ENCODE measurements at regions of chrX and their contacts with region 1.

Region 1: DNA sequence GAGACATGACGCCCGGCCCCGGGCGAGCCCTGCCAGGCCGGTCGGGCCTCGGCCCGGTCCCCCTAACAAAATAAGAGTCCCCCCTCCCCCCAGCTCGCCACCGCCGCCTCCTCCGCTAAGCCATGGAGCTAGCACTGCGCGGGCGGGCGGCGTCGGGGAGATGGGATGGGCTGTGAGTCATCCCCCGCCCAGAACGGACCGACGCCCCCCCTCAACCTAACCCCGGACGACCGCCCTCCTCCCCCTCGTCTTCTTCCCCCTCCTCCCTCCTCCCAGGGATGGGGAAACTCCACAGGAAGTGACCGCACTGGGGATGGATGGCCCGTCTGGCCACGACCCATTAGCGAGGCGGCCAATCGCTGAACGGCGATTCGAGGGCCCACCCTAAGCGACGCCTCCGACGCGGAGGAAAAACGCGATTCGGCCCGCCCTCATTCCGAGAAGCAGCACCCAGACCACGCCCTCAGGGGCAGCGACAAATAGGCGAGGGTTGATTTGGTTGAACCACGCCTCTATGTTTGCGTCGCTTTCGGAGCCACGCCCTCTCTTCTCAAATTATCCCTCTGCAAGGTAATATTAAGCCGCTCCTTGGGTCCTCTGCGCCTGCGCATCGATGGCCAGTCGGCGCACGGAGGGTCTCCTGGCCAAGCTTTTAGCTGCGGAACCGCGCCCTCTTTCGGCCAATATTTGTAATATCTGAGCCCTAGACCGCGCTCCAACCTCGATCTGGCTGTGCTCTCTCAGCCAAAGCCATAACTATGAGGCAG is at the start of gene TFE3:
- DNase-seq: peak; percentile 77 to 96 (median 91)
- ATAC-seq: peak; percentile 93
- H3K4me3 ChIP-seq: peak within 1 kb of the TSS; percentile 54
- H3K4me3 Mint-ChIP-seq: peak within 1 kb of the TSS; percentile 78 to 95 (median 89)
- H3K27ac ChIP-seq: peak within 1 kb of the TSS; percentile 96
- H3K27ac Mint-ChIP-seq: peak within 1 kb of the TSS; percentile 80 to 96 (median 96)
- H3K4me1 ChIP-seq: peaks cover 5 to 21% of the 10 kb centered on the region in 2 donors
- H3K4me1 Mint-ChIP-seq: peaks cover 18 to 40% (median 31%) of the 10 kb centered on the region in 7 donors
- H3K27me3 ChIP-seq: no peaks in the 10 kb centered on the region
- H3K27me3 Mint-ChIP-seq: no peaks in the 10 kb centered on the region
- total RNA-seq, gene TFE3: 26.2 to 54.2 (median 30.5) TPM

Region 2: GRCh38 chrX:48475774-48476577 is 567.4 kb before region 1 on chrX and contains the start of gene FTSJ1:
- CTCF ChIA-PET with region 1: no interaction called
- POLR2A ChIA-PET with region 1: no interaction called
- intact Hi-C with region 1: loop called in 1 of 2 experiments (anchors 1 kb)
- DNase-seq: peak; percentile 59 to 95 (median 91)
- ATAC-seq: peak; percentile 93
- H3K4me3 ChIP-seq: peak within 1 kb of the TSS; percentile 83
- H3K4me3 Mint-ChIP-seq: peak within 1 kb of the TSS; percentile 74 to 93 (median 88)
- H3K27ac ChIP-seq: peak within 1 kb of the TSS; percentile 93
- H3K27ac Mint-ChIP-seq: peak within 1 kb of the TSS; percentile 84 to 96 (median 93)
- H3K4me1 ChIP-seq: peaks cover 8 to 10% of the 10 kb centered on the region in 2 donors
- H3K4me1 Mint-ChIP-seq: peaks cover 19 to 35% (median 26%) of the 10 kb centered on the region in 7 donors
- H3K27me3 ChIP-seq: no peaks in the 10 kb centered on the region
- H3K27me3 Mint-ChIP-seq: no peaks in the 10 kb centered on the region
- total RNA-seq, gene FTSJ1: 48.6 to 62.5 (median 59.5) TPM

Region 3: GRCh38 chrX:48597353-48598264 is 445.8 kb before region 1 on chrX and contains the start of gene WDR13:
- CTCF ChIA-PET with region 1: no interaction called
- POLR2A ChIA-PET with region 1: no interaction called
- intact Hi-C with region 1: loop called (anchors 1 kb)
- DNase-seq: peak; percentile 77 to 93 (median 91)
- ATAC-seq: peak; percentile 93
- H3K4me3 ChIP-seq: peak within 1 kb of the TSS; percentile 98
- H3K4me3 Mint-ChIP-seq: peak within 1 kb of the TSS; percentile 81 to 99 (median 96)
- H3K27ac ChIP-seq: peak within 1 kb of the TSS; percentile 94
- H3K27ac Mint-ChIP-seq: peak within 1 kb of the TSS; percentile 98 to 100 (median 99)
- H3K4me1 ChIP-seq: peaks cover 0 to 8% of the 10 kb centered on the region in 2 donors
- H3K4me1 Mint-ChIP-seq: peaks cover 4 to 16% (median 11%) of the 10 kb centered on the region in 7 donors
- H3K27me3 ChIP-seq: no peaks in the 10 kb centered on the region
- H3K27me3 Mint-ChIP-seq: peaks cover 0 to 2% (median 0%) of the 10 kb centered on the region in 5 donors
- total RNA-seq, gene WDR13: 44.8 to 66.9 (median 54.4) TPM

Region 4: GRCh38 chrX:48891402-48892288 is 151.8 kb before region 1 on chrX:
- CTCF ChIA-PET with region 1: no interaction called
- POLR2A ChIA-PET with region 1: no interaction called
- intact Hi-C with region 1: loop called in 1 of 2 experiments (anchors 2 kb)
- DNase-seq: peak; percentile 61 to 79 (median 75)
- ATAC-seq: peak; percentile 94
- H3K4me3 ChIP-seq: peak overlapping the region; percentile 53
- H3K4me3 Mint-ChIP-seq: peak overlapping the region; percentile 70 to 98 (median 86)
- H3K27ac ChIP-seq: peak overlapping the region; percentile 81
- H3K27ac Mint-ChIP-seq: peak overlapping the region in 8 of 9 donors; percentile 14 to 82 (median 64)
- H3K4me1 ChIP-seq: peaks cover 7 to 8% of the 10 kb centered on the region in 2 donors
- H3K4me1 Mint-ChIP-seq: peaks cover 12 to 31% (median 20%) of the 10 kb centered on the region in 7 donors
- H3K27me3 ChIP-seq: no peaks in the 10 kb centered on the region
- H3K27me3 Mint-ChIP-seq: no peaks in the 10 kb centered on the region

Region 5: GRCh38 chrX:48972220-48973167 is 70.9 kb before region 1 on chrX:
- CTCF ChIA-PET with region 1: no interaction called
- POLR2A ChIA-PET with region 1: interaction called, 4 read pairs
- intact Hi-C with region 1: loop called in 1 of 2 experiments (anchors 1 kb)
- DNase-seq: peak in 4 of 9 donors; percentile 17 to 28 (median 22)
- ATAC-seq: peak; percentile 74
- H3K4me3 ChIP-seq: peak overlapping the region; percentile 30
- H3K4me3 Mint-ChIP-seq: peak overlapping the region in 9 of 10 donors; percentile 12 to 72 (median 57)
- H3K27ac ChIP-seq: no peak overlapping the region
- H3K27ac Mint-ChIP-seq: no peak overlapping the region
- H3K4me1 ChIP-seq: peaks cover 0 to 8% of the 10 kb centered on the region in 2 donors
- H3K4me1 Mint-ChIP-seq: peaks cover 6 to 17% (median 12%) of the 10 kb centered on the region in 7 donors
- H3K27me3 ChIP-seq: no peaks in the 10 kb centered on the region
- H3K27me3 Mint-ChIP-seq: no peaks in the 10 kb centered on the region

Region 6: GRCh38 chrX:49079489-49080428 is 36.4 kb after region 1 on chrX and contains the start of gene WDR45:
- CTCF ChIA-PET with region 1: no interaction called
- POLR2A ChIA-PET with region 1: interaction called, 9 read pairs
- intact Hi-C with region 1: loop called (anchors 1 kb)
- DNase-seq: peak; percentile 43 to 76 (median 69)
- ATAC-seq: peak; percentile 88
- H3K4me3 ChIP-seq: peak within 1 kb of the TSS; percentile 81
- H3K4me3 Mint-ChIP-seq: peak within 1 kb of the TSS; percentile 69 to 100 (median 91)
- H3K27ac ChIP-seq: peak within 1 kb of the TSS; percentile 95
- H3K27ac Mint-ChIP-seq: peak within 1 kb of the TSS; percentile 94 to 100 (median 99)
- H3K4me1 ChIP-seq: no peaks in the 10 kb centered on the region
- H3K4me1 Mint-ChIP-seq: peaks cover 6 to 18% (median 8%) of the 10 kb centered on the region in 7 donors
- H3K27me3 ChIP-seq: no peaks in the 10 kb centered on the region
- H3K27me3 Mint-ChIP-seq: no peaks in the 10 kb centered on the region
- total RNA-seq, gene WDR45: 51.4 to 115 (median 80.0) TPM

Measured in naive thymus-derived CD4-positive, alpha-beta T cell (primary cell).